PC-3 (cell line): ENCODE measurements at regions of chr6 and their contacts with region 1.

Region 1: DNA sequence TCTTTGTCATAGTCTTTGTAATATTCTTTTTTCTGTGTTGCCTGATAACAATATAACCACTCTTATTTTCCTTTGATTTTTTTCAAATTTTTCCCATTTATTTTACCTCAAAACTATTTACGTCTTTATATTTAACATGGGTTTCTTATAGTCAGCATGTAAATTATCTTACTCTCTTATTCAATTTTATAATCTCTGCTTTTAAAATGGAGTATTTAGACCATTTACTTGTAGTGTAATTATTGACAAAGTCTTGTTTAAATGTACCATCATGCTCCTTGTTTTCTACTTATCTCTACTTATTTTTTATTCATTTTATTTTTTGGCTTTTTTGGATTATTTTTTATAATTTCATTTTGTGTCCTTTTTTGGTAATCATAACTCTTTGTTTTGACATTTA is 476.5 kb upstream of the MAP3K7 start:
- DNase-seq: no peak
- ATAC-seq: no peak
- H3K4me3 ChIP-seq: no peak overlapping the region
- H3K27ac ChIP-seq: no peak overlapping the region
- H3K4me1 ChIP-seq: no peaks in the 10 kb centered on the region
- H3K27me3 ChIP-seq: no peaks in the 10 kb centered on the region
- CTCF ChIP-seq: no peak

Region 2: DNA sequence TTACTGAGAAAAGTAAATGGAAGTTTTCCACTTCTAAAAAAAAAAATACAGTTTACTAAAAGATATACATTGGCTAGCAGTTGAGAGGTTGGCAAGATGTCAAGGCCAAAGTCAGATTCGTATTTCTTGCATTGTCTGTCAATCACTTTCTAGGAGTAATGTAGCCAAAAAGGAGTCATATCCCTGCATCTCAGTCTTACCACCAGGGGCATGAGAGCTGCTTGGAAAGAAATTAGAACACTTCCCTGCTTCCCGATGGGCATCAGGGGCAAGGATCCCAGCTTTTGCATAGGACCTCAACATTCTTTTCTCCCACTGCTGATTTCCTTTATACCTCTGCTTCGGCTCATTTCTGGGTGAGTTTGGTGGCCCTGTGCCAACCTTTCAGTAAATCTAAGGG is 104.5 kb after region 1 on chr6:
- CTCF ChIA-PET with region 1: no interaction called
- POLR2A ChIA-PET with region 1: no interaction called
- intact Hi-C with region 1: loop called (anchors 10 kb)
- DNase-seq: no peak
- ATAC-seq: no peak
- H3K4me3 ChIP-seq: no peak overlapping the region
- H3K27ac ChIP-seq: no peak overlapping the region
- H3K4me1 ChIP-seq: no peaks in the 10 kb centered on the region
- H3K27me3 ChIP-seq: 0 out of 2 replicates have a peak, but pooled peaks cover 9% of the 10 kb centered on the region
- CTCF ChIP-seq: no peak